Head of caudate nucleus (tissue), 42 donors: ENCODE measurements at regions of chr11 and their contacts with region 1.

Region 1: GRCh38 chr11:61332797-61333549 is at the starts of genes DDB1 and TKFC:
- DNase-seq: peak; percentile 87 to 99 (median 97)

Region 2: GRCh38 chr11:61061081-61061826 is 271.7 kb before region 1 on chr11:
- intact Hi-C with region 1: no loop called
- DNase-seq: peak in 1 of 42 donors; percentile 8

Region 3: GRCh38 chr11:61102667-61103571 is 230.1 kb before region 1 on chr11:
- intact Hi-C with region 1: no loop called
- DNase-seq: no peak

Region 4: DNA sequence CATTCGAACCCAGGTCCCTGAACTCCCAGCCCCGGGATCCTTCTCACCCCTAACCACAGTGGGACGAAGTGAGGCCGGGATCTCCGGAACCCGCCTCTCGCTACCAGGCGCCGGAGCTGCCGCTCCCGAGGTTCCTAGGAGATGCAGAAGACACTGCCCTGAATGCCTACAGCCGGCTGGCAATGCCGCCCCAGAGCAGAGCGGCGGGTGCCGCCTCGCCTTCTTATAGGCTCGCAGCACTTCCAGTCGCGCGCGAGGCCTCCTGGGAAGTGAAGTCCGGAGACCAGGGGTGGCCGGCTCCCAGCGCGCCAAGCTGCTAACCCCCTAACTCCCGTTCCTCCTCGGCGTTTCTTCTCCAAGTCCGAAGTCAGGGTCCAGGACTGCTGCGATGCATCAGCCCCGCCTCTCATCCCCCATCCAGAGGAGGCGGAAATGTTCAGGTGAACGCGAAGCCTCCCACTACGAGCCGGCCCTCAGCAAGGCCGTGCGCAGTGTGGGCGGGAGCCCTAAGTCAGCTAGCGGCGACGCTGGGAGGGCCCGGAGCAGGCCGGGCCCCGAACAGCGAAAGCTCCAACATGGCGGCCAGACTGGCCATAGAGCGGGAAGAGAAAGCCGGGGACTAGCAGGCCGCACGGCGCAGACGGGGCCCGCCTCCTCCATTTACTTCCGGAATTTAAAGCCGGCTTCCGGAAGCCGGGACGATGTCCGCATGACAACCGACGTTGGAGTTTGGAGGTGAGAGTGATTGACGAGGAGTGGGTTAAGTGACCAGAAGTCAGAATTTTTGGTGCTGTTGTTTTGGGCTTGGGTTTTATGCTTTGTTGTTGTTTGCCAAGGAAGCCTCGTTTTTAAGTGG is 28.9 kb after region 1 on chr11 and contains the starts of genes CYB561A3 and TMEM138:
- intact Hi-C with region 1: loop called (anchors 1 kb)
- DNase-seq: peak; percentile 88 to 98 (median 94)

Region 5: DNA sequence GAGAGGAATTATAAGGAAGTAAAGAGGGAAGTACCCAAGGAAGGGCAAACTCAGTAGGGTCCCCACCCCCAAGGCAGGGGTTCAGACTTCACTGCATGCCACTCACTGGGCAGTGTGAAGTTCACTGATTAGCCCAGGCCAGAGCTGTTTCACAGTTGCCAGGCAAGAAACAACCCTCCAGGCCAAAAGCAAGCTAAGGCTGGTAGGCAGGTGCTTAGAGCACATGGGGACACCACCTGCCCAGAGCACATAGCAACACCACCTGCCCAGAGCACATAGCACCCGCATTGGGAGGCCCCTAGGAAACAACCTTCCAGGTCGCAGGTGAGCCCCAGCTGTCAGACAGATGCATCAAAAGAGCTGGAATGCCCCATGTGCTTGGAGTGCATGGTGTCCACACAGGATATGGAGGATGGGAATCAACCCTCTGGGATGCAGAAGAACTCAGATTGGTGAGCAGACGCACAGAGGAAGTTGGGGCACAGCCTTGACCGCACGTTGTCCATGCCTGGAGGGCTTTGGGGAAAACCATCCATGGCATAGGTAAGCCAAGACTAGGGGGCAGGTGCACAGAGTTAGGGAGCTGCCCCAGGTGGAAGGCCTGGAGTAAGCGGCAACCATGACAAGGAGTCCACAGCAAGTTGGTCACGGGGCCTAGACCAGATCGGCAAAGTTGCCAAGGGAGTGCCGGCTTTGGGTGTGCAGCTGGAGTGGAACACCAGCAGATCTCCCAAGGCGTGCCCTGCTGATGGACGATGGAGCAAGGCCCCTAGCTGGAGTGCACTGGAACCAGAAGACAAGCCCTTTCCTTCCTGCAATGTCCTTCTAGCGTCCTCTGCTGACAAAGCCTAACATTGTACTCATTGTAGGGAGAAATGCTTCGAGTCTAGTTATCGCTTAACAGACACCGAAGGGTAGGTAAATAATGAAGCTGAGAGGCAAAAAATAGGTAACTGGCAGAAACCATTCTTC is 51.6 kb after region 1 on chr11:
- intact Hi-C with region 1: loop called (anchors 5 kb)
- DNase-seq: no peak

Region 6: GRCh38 chr11:61516675-61517572 is 184.0 kb after region 1 on chr11:
- intact Hi-C with region 1: no loop called
- DNase-seq: peak in 30 of 42 donors; percentile 41 to 83 (median 62)